Pancreas (tissue), 10 donors: ENCODE measurements at regions of chr13 and their contacts with region 1.

Region 1: GRCh38 chr13:51590971-51591627 is 6.8 kb downstream of the WDFY2 start:
- DNase-seq: peak in 2 of 6 donors; percentile 26 to 48
- ATAC-seq: peak; percentile 71 to 83 (median 78)
- H3K4me3 ChIP-seq: peak overlapping the region in 1 of 4 donors; percentile 8
- H3K27ac ChIP-seq: peak overlapping the region in 3 of 4 donors; percentile 31 to 72 (median 70)
- H3K4me1 ChIP-seq: peaks cover 34 to 87% (median 68%) of the 10 kb centered on the region in 3 donors
- H3K27me3 ChIP-seq: no peaks in the 10 kb centered on the region
- CTCF ChIP-seq: no peak

Region 2: GRCh38 chr13:51435002-51435578 is 156.0 kb before region 1 on chr13:
- intact Hi-C with region 1: loop called in 1 of 3 experiments (anchors 10 kb)
- DNase-seq: no peak
- ATAC-seq: peak; percentile 39 to 69 (median 56)
- H3K4me3 ChIP-seq: no peak overlapping the region
- H3K27ac ChIP-seq: no peak overlapping the region
- H3K4me1 ChIP-seq: peaks cover 19 to 29% (median 20%) of the 10 kb centered on the region in 3 donors
- H3K27me3 ChIP-seq: no peaks in the 10 kb centered on the region
- CTCF ChIP-seq: peak in 3 of 4 donors; percentile 26 to 35 (median 32)

Region 3: GRCh38 chr13:51729866-51730546 is 138.9 kb after region 1 on chr13:
- intact Hi-C with region 1: loop called in 2 of 3 experiments (anchors 10 kb)
- DNase-seq: peak in 1 of 6 donors; percentile 55
- ATAC-seq: peak; percentile 27 to 65 (median 44)
- H3K4me3 ChIP-seq: no peak overlapping the region
- H3K27ac ChIP-seq: peak overlapping the region in 2 of 4 donors; percentile 75 to 85
- H3K4me1 ChIP-seq: peaks cover 44 to 65% (median 57%) of the 10 kb centered on the region in 3 donors
- H3K27me3 ChIP-seq: no peaks in the 10 kb centered on the region
- CTCF ChIP-seq: no peak

Region 4: DNA sequence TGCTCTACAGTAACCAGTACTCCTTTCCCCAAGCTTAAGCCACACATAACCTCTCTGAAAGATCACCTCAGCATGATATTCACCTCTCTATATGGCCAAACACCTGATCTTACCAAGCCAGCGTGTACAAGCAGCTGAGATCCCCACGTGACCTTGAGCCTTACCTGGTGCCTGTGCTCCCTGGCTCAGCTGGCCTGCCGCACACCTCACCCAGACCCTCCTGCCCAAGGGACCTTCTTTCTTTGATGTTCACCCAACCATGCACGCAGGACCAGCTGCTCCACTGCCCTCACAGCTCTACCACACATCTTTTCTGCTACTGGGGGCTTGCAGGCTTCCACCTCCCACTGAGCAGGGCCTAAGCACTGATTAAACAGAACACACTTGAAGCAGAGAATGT is 203.9 kb after region 1 on chr13:
- intact Hi-C with region 1: no loop called
- DNase-seq: peak in 1 of 6 donors; percentile 27
- ATAC-seq: peak; percentile 8 to 48 (median 28)
- H3K4me3 ChIP-seq: no peak overlapping the region
- H3K27ac ChIP-seq: peak overlapping the region in 2 of 4 donors; percentile 9 to 48
- H3K4me1 ChIP-seq: peaks cover 5 to 31% (median 6%) of the 10 kb centered on the region in 3 donors
- H3K27me3 ChIP-seq: no peaks in the 10 kb centered on the region
- CTCF ChIP-seq: no peak